Activated CD4-positive, alpha-beta memory T cell treated with anti-CD3 and anti-CD28 coated beads for 36 hours (primary cell): ENCODE measurements at regions of chr7 and their contacts with region 1.

Region 1: GRCh38 chr7:93036807-93037206 is 81.0 kb downstream of the SAMD9 start:
- DNase-seq: peak; percentile 64
- H3K4me3 Mint-ChIP-seq: no peak overlapping the region
- H3K27ac Mint-ChIP-seq: peak overlapping the region; percentile 53
- H3K4me1 Mint-ChIP-seq: peaks cover 22% of the 10 kb centered on the region
- H3K27me3 Mint-ChIP-seq: no peaks in the 10 kb centered on the region

Region 2: GRCh38 chr7:92854501-92855238 is 182.1 kb before region 1 on chr7:
- CTCF ChIA-PET with region 1: no interaction called
- POLR2A ChIA-PET with region 1: no interaction called
- intact Hi-C with region 1: loop called (anchors 2 kb)
- DNase-seq: peak; percentile 46
- H3K4me3 Mint-ChIP-seq: no peak overlapping the region
- H3K27ac Mint-ChIP-seq: peak overlapping the region; percentile 0
- H3K4me1 Mint-ChIP-seq: peaks cover 16% of the 10 kb centered on the region
- H3K27me3 Mint-ChIP-seq: peaks cover 5% of the 10 kb centered on the region

Region 3: GRCh38 chr7:92880212-92881090 is 156.4 kb before region 1 on chr7:
- CTCF ChIA-PET with region 1: no interaction called
- POLR2A ChIA-PET with region 1: no interaction called
- intact Hi-C with region 1: no loop called
- DNase-seq: peak; percentile 44
- H3K4me3 Mint-ChIP-seq: no peak overlapping the region
- H3K27ac Mint-ChIP-seq: no peak overlapping the region
- H3K4me1 Mint-ChIP-seq: peaks cover 36% of the 10 kb centered on the region
- H3K27me3 Mint-ChIP-seq: no peaks in the 10 kb centered on the region

Region 4: GRCh38 chr7:92925876-92926696 is 110.7 kb before region 1 on chr7:
- CTCF ChIA-PET with region 1: no interaction called
- POLR2A ChIA-PET with region 1: no interaction called
- intact Hi-C with region 1: no loop called
- DNase-seq: no peak
- H3K4me3 Mint-ChIP-seq: no peak overlapping the region
- H3K27ac Mint-ChIP-seq: no peak overlapping the region
- H3K4me1 Mint-ChIP-seq: no peaks in the 10 kb centered on the region
- H3K27me3 Mint-ChIP-seq: peaks cover 10% of the 10 kb centered on the region